ENCODE measurements at regions of chr1 and their contacts with region 1.

Region 1: DNA sequence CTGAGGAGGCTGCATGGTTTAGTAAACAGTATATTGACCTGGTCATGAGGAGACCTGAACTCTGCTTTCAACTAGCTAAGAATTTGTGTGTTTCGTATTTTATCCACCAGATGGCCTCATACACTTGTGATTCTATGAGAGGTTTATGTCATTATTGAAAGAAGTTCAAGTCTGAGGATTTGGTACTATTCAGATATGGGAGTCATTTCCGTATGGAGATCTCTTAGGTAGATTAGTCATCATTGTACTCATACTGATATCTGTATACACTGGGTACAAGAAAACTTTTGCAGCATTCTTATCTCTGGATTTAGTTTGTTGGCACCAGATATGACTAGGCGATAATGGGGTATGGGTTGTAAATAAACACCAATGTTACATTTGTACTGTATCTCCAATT is 26.6 kb downstream of the ATF6 start:
- DNase-seq: no peak
- ATAC-seq: peak; percentile 88
- H3K4me3 Mint-ChIP-seq: no peak overlapping the region
- H3K27ac Mint-ChIP-seq: no peak overlapping the region
- H3K4me1 Mint-ChIP-seq: peaks cover 18% of the 10 kb centered on the region
- H3K27me3 Mint-ChIP-seq: no peaks in the 10 kb centered on the region

Region 2: DNA sequence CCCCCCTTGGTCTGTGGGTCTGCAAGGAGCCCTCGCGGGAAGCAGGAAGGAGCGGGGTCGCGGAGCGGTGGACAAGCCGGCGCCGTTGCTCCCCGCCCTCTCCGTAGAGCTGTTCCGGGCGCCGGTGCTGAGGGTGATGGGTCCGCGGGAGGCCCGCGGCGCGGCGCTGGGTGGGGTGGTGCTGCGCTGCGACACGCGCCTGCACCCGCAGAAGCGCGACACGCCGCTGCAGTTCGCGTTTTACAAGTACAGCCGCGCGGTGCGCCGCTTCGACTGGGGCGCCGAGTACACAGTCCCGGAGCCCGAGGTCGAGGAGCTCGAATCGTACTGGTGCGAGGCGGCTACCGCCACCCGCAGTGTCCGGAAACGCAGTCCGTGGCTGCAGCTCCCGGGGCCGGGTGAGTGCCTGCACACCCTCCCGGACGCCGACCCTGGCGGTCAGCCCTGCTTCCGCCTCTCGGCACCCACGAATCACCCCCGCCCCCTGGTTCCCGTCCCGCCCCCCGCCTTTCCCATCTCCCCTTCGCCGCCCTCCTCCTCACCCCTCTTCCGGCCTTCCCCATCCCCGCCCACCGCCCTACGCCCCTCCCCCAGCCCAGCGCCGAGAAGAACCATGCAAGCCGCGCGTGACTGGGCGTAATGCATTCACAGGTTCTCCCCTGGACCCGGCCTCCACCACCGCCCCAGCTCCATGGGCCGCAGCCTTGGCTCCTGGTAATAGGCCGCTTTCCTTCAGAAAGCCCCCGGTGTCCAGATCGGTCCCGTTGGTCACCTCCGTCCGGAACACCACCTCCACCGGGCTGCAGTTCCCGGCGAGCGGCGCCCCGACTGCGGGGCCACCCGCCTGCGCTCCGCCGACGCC is 65.9 kb before region 1 on chr1:
- CTCF ChIA-PET with region 1: no interaction called
- DNase-seq: peak; percentile 84
- ATAC-seq: peak; percentile 71
- H3K4me3 Mint-ChIP-seq: peak overlapping the region; percentile 79
- H3K27ac Mint-ChIP-seq: peak overlapping the region; percentile 89
- H3K4me1 Mint-ChIP-seq: peaks cover 55% of the 10 kb centered on the region
- H3K27me3 Mint-ChIP-seq: peaks cover 61% of the 10 kb centered on the region

Region 3: GRCh38 chr1:161781995-161782394 is 10.7 kb before region 1 on chr1:
- CTCF ChIA-PET with region 1: interaction called, 13 read pairs
- DNase-seq: no peak
- ATAC-seq: no peak
- H3K4me3 Mint-ChIP-seq: no peak overlapping the region
- H3K27ac Mint-ChIP-seq: no peak overlapping the region
- H3K4me1 Mint-ChIP-seq: no peaks in the 10 kb centered on the region
- H3K27me3 Mint-ChIP-seq: no peaks in the 10 kb centered on the region

Region 4: GRCh38 chr1:162023547-162024501 is 231.1 kb after region 1 on chr1 and contains the start of gene OLFML2B:
- CTCF ChIA-PET with region 1: interaction called, 17 read pairs
- DNase-seq: peak; percentile 58
- ATAC-seq: peak; percentile 98
- H3K4me3 Mint-ChIP-seq: peak within 1 kb of the TSS; percentile 73
- H3K27ac Mint-ChIP-seq: no peak within 1 kb of the TSS
- H3K4me1 Mint-ChIP-seq: peaks cover 11% of the 10 kb centered on the region
- H3K27me3 Mint-ChIP-seq: peaks cover 65% of the 10 kb centered on the region
- total RNA-seq, gene OLFML2B: not detected

Region 5: GRCh38 chr1:162035241-162035640 is 242.5 kb after region 1 on chr1:
- CTCF ChIA-PET with region 1: interaction called, 66 read pairs
- DNase-seq: no peak
- ATAC-seq: no peak
- H3K4me3 Mint-ChIP-seq: no peak overlapping the region
- H3K27ac Mint-ChIP-seq: no peak overlapping the region
- H3K4me1 Mint-ChIP-seq: peaks cover 2% of the 10 kb centered on the region
- H3K27me3 Mint-ChIP-seq: peaks cover 56% of the 10 kb centered on the region